A673 (cell line): ENCODE measurements at regions of chr10 and their contacts with region 1.

Region 1: GRCh38 chr10:59625721-59626522 is 83.7 kb downstream of the SLC16A9 start:
- DNase-seq: peak; percentile 94
- H3K4me3 ChIP-seq: no peak overlapping the region
- H3K27ac ChIP-seq: no peak overlapping the region
- H3K4me1 ChIP-seq: no peaks in the 10 kb centered on the region
- H3K27me3 ChIP-seq: no peaks in the 10 kb centered on the region
- CTCF ChIP-seq: peak; percentile 93

Region 2: GRCh38 chr10:58952747-58953466 is 673.0 kb before region 1 on chr10:
- CTCF ChIA-PET with region 1: interaction called, 5 read pairs
- POLR2A ChIA-PET with region 1: no interaction called
- intact Hi-C with region 1: loop called (anchors 2 kb)
- DNase-seq: peak; percentile 57
- H3K4me3 ChIP-seq: no peak overlapping the region
- H3K27ac ChIP-seq: no peak overlapping the region
- H3K4me1 ChIP-seq: no peaks in the 10 kb centered on the region
- H3K27me3 ChIP-seq: no peaks in the 10 kb centered on the region
- CTCF ChIP-seq: peak; percentile 85

Region 3: DNA sequence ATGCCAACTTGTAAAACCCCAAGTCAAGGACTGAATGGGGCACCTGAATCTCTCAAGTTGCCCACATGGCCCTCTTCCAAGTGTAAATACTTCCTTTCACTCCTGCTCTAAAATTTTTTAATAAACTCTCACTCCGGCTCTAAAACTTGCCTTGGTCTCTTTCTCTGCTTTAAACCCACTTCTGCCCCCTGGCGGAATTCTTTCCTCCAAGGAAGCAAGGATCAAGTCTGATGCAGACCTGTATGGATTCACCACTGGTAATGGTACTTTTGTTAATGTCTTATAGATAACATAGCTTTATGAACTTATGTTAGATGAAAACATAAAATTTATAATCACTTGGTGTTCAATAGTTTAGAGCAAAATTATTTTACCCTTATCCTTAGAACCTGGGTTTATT is 49.9 kb after region 1 on chr10:
- CTCF ChIA-PET with region 1: no interaction called
- POLR2A ChIA-PET with region 1: no interaction called
- intact Hi-C with region 1: loop called (anchors 1 kb)
- DNase-seq: peak; percentile 49
- H3K4me3 ChIP-seq: no peak overlapping the region
- H3K27ac ChIP-seq: no peak overlapping the region
- H3K4me1 ChIP-seq: peaks cover 9% of the 10 kb centered on the region
- H3K27me3 ChIP-seq: no peaks in the 10 kb centered on the region
- CTCF ChIP-seq: peak; percentile 51

Region 4: DNA sequence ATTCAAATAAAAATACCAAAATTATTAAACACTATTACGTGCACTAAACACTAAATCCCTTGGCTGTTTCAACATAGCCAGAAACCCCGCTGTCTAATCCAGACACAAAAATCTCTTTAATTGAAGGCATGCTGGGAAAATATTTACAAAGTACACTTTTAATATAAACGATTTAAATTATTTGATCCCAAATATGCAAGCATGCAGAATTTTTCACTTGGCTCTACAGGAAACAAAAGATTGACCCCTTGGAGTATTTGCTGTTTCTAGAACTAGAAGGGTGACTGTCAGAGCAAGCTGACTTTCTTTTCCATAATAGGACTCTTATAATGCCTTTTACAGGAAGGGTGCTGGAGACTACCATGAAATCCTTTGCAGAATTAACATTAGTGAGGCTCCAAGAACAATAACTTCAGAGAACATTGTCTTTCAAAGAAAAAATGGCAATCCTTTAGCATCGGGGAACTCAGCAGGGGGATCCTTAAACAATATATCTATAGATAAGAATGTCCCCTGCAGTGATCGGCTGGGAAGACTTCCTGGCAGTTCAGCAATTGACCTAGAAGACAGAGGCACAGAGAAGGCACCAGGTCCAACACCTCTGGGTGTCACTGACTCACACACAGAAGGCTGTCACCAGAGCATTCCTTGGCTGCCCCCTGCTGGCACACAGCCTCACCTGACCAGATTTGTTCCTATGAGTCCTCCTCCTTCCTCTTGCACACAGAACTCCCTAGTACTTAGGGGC is 183.1 kb after region 1 on chr10:
- CTCF ChIA-PET with region 1: interaction called, 10 read pairs
- POLR2A ChIA-PET with region 1: no interaction called
- intact Hi-C with region 1: loop called (anchors 1 kb)
- DNase-seq: peak; percentile 83
- H3K4me3 ChIP-seq: no peak overlapping the region
- H3K27ac ChIP-seq: no peak overlapping the region
- H3K4me1 ChIP-seq: peaks cover 27% of the 10 kb centered on the region
- H3K27me3 ChIP-seq: no peaks in the 10 kb centered on the region
- CTCF ChIP-seq: peak; percentile 78

Region 5: GRCh38 chr10:60032723-60033122 is 406.8 kb after region 1 on chr10:
- CTCF ChIA-PET with region 1: interaction called, 6 read pairs
- POLR2A ChIA-PET with region 1: no interaction called
- intact Hi-C with region 1: loop called (anchors 1 kb)
- DNase-seq: peak; percentile 73
- H3K4me3 ChIP-seq: no peak overlapping the region
- H3K27ac ChIP-seq: no peak overlapping the region
- H3K4me1 ChIP-seq: peaks cover 20% of the 10 kb centered on the region
- H3K27me3 ChIP-seq: peaks cover 49% of the 10 kb centered on the region
- CTCF ChIP-seq: peak; percentile 80

Region 6: DNA sequence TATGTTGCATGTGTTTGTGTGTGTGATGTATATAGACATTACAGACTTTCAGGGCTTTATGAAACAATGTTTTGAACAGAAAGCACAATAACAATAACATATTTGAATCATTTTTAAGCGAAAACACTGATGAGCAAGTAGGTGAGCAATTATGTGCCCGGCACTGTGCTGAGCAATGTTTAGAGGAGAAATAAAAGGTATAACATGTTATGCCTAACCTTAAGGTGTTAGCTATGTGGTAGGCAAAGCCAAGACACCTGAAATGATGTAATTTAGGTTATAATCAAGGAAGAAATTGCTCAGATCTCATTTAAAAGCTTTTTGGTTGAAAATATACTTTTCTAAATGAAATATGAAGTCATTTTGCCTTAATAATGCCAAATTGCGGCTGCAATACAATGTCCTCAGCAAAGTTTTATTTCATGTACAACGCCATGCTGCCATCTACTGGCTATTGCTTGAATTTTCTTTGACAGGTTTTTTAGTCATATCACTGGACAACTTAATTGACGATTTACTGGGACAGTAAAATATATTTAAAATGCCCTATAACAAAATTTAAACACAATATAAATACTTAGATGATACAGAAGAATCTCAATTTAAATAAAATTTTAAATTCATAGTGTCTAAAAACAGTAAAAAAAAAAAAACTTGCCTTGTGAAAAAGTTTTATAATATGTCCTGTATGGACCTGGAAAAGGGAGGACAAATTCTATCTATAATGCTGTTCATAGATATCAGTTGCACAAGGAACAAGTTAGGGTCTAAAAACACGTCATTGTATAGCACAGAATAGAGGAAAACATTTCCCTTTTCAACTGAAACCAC is 1021.3 kb after region 1 on chr10:
- CTCF ChIA-PET with region 1: no interaction called
- POLR2A ChIA-PET with region 1: no interaction called
- intact Hi-C with region 1: loop called (anchors 5 kb)
- DNase-seq: peak; percentile 83
- H3K4me3 ChIP-seq: no peak overlapping the region
- H3K27ac ChIP-seq: no peak overlapping the region
- H3K4me1 ChIP-seq: peaks cover 27% of the 10 kb centered on the region
- H3K27me3 ChIP-seq: no peaks in the 10 kb centered on the region
- CTCF ChIP-seq: peak; percentile 79